Transverse colon (tissue), 4 donors: ENCODE measurements at regions of chr1 and their contacts with region 1.

Region 1: GRCh38 chr1:227886993-227887696 is 60.6 kb downstream of the WNT9A start:
- DNase-seq: peak; percentile 62
- H3K4me3 ChIP-seq: peak overlapping the region; percentile 35 to 57 (median 41)
- H3K27ac ChIP-seq: peak overlapping the region; percentile 88 to 96 (median 90)
- H3K4me1 ChIP-seq: peaks cover 12 to 24% (median 20%) of the 10 kb centered on the region in 4 donors
- H3K27me3 ChIP-seq: no peaks in the 10 kb centered on the region
- CTCF ChIP-seq: no peak
- EP300 ChIP-seq: no peak
- POLR2A ChIP-seq: no peak

Region 2: DNA sequence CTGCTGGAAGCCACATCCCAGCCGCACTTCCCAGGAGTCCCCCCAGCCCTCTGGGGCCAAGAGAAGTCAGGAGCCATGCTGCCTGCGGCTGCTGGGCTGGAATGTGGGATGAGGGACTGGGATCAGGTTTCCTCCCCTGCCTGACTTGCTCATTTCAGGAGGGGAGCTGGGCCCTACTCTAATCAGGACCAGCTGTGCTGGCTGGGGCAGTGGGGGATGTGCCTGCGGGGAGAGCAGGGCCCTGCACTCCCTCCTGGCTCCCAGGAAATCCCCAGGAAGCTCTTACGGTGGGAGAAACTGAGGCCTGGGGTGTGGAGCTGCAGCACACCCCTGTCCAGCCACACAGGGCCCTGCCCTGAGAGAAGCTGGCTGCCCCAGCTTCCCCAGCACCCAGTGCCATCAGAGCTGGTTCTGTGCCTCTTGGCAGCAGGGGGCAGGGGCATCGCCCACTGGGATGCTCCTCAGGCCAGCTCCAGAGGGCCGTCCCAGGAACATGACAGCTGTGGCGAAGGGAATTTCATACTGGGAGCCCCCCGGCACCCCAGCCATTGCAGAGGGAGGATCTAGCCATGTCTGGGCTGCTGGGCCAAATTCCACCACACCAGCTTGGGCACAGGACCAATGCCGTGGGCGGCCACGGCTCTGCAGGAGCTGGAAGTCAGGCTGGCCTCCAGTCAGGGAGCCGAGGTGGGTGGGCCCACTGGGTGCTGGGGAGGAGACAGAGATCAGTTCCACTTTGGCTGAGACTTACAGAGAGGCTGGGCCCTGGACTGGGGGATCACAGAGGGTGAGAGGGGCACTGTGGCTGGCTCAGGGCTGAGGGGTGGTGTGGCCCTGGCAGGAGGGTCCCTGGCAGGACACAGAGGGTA is 93.0 kb before region 1 on chr1:
- in situ Hi-C with region 1: no loop called
- intact Hi-C with region 1: loop called (anchors 10 kb)
- DNase-seq: no peak
- H3K4me3 ChIP-seq: no peak overlapping the region
- H3K27ac ChIP-seq: peak overlapping the region in 2 of 4 donors; percentile 26 to 30
- H3K4me1 ChIP-seq: peaks cover 0 to 12% (median 8%) of the 10 kb centered on the region in 4 donors
- H3K27me3 ChIP-seq: peaks cover 4% of the 10 kb centered on the region
- CTCF ChIP-seq: no peak
- EP300 ChIP-seq: no peak
- POLR2A ChIP-seq: no peak